GM10248 (cell line): ENCODE measurements at regions of chr14 and their contacts with region 1.

Region 1: DNA sequence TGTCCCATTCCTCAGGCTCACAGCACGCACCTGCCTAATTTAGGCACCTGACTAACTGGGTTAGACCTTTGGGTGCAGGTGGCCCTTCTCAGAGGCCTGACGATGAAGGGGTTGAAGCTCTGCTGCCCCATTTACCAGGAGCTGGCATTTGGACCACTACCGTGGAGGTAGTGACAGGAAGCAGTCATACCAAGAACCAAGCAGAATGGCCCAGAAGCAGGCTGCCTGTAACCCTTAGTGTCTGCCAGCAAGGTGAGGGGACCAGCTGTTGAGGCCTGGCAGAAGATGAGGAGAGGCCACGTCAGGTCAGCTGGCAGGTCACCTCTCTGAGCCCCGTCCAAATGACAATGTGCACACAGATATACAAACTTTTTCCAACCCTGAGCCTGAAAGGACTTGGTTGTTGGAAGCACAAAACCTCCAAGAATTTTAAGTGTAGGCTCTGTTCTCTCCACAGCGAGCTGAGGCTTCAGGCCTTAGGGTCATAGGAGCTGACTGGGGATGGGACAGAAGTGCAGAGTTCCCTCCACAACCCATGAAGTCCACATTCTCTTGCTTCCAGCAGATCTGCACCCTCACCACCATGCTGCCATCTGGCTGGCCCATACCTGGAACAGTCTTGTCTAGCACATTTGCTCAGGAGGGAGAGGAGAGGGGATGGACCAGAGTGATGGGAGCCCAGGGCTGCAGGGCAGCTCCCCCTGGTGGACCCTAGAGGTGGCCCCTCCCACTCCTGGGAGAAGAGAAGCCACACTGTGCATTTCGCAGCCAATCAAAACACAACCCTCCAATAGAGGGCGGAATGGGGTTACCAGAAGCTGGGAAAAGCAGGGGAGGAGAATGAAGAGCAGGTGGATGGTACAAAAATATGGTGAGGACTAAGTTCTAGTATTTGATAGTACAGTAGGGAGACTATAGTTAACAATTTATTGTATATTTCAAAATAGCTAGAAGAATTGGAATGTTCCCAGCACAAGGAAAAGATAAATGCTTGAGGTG is 23.3 kb downstream of the VASH1 start:
- DNase-seq: peak; percentile 82
- CTCF ChIP-seq: peak; percentile 65

Region 2: DNA sequence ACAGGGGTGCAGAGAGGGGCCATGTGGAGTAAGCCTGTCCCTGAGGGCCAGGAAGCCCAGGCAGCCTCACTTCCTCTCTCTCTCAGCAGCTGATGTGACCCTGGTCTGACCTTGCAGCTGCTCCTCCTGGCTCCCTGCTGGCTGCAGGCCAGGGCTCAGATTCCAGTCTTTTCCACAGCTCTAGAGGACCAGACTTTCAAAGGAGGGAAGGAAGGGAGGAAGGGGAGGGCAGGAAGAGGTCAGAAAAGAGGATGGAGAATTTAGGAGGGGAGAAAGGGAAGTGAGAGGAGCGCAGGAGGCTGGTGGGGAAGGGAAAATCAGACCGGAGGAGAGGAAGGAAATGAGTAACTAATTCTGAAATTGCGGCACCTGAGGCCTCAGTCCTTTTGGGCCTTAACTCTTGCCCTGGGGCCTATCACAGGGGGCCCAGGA is 64.2 kb before region 1 on chr14:
- CTCF ChIA-PET with region 1: interaction called, 15 read pairs
- POLR2A ChIA-PET with region 1: no interaction called
- DNase-seq: peak; percentile 59
- CTCF ChIP-seq: no peak

Region 3: GRCh38 chr14:76767681-76768656 is 16.6 kb before region 1 on chr14:
- CTCF ChIA-PET with region 1: interaction called, 106 read pairs
- POLR2A ChIA-PET with region 1: interaction called, 3 read pairs
- DNase-seq: peak; percentile 82
- CTCF ChIP-seq: no peak

Region 4: GRCh38 chr14:76806446-76806845 is 21.9 kb after region 1 on chr14:
- CTCF ChIA-PET with region 1: interaction called, 45 read pairs
- POLR2A ChIA-PET with region 1: no interaction called
- DNase-seq: no peak
- CTCF ChIP-seq: no peak

Region 5: DNA sequence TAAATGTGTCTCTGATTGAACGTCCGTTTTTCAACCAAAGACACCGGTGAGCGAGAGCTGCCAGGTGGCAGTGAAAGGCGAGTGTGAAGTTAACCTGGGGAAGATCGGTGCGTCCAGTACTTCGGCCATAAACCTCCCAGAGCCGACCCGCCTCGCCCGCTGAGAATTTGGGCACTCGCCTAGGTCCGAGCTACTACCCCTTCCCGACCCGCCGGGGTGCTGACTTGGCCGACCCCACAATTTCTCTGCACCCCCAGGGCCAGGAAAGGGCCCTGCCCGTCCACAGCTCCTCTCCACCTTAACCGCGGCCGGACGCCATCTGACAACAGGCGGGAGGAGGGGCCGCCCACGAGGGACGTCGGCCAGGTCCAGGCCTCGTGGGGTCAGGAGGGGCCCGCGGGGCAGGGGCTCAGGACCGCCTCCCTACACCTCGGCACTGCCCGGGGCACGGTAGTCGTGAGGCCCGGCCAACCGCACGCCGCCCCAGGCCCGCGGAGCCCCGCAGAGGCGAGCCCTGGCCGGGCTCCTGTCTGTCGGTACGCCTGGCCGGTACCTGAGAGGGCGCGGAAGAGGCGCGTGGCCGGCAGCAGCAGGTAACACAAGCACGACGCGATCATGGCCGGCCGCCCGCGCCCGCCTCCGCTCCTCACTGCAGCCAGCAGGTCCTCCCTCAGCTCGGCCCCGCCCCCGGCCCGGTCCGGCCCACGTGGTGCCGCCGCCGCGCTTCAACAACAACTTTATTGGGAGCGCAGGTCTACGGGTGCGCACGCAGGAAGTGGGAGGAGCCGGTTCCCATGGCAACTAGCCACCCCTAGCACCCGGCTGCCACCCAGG is 27.9 kb after region 1 on chr14 and contains the start of gene ANGEL1:
- CTCF ChIA-PET with region 1: interaction called, 45 read pairs
- POLR2A ChIA-PET with region 1: no interaction called
- DNase-seq: peak; percentile 93
- CTCF ChIP-seq: no peak

Region 6: GRCh38 chr14:76829650-76830421 is 45.3 kb after region 1 on chr14:
- CTCF ChIA-PET with region 1: no interaction called
- POLR2A ChIA-PET with region 1: no interaction called
- DNase-seq: no peak
- CTCF ChIP-seq: no peak

Region 7: GRCh38 chr14:76882651-76883050 is 98.1 kb after region 1 on chr14:
- CTCF ChIA-PET with region 1: no interaction called
- POLR2A ChIA-PET with region 1: no interaction called
- DNase-seq: no peak
- CTCF ChIP-seq: no peak